Left cardiac atrium (tissue), 4 donors: ENCODE measurements at regions of chr12 and their contacts with region 1.

Region 1: DNA sequence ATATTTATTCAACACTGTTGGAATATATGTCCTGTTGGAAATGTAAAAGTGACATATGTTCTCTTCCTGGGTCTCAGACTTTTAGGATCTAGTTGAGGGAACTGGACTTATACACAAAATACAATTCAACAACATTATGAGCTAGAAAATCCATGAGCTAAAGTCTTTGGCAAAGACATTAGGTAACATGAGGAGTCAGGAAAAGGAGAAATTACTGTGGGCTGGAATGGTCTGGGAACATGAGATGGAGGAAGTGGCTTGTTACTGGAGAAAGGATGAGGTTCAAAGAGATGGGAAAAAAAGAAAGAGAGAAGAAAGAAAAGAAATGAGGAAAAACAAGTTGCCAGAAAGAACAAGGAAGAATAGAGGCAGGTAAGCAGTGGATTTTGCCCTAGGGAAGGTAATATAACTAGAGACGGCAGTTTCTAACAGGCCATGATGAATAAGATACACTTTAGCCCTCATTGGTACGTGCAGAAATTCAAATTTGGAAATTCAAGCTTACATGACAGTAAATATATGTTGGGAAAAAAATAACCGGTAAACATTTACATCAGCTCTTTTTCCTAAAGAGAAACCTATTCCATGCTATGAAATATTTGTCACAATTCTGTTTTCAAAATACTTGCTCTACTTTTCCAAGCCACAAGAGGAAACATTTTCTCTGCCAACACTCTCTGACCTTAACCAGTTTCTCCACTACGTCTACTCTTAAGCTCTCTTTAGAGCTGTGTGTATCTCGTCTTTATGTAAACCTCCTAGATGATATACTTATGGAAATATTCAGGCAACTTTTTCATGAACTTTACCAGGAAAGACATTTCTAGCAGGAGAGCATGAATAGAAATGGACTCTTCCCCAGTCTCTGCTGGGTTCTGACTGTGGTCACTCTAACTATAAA is 268.8 kb upstream of the BTG1 start:
- DNase-seq: no peak
- ATAC-seq: no peak

Region 2: GRCh38 chr12:92466391-92467305 is 52.2 kb after region 1 on chr12:
- intact Hi-C with region 1: loop called in 1 of 2 experiments (anchors 5 kb)
- DNase-seq: no peak
- ATAC-seq: peak; percentile 32 to 33

Region 3: GRCh38 chr12:92516277-92516600 is 101.8 kb after region 1 on chr12:
- intact Hi-C with region 1: no loop called
- DNase-seq: no peak
- ATAC-seq: peak in 1 of 2 donors; percentile 93

Region 4: GRCh38 chr12:92561543-92561899 is 147.1 kb after region 1 on chr12:
- intact Hi-C with region 1: loop called in 1 of 2 experiments (anchors 5 kb)
- DNase-seq: peak; percentile 49
- ATAC-seq: peak; percentile 90